ENCODE measurements at regions of chr5 and their contacts with region 1.

Region 1: DNA sequence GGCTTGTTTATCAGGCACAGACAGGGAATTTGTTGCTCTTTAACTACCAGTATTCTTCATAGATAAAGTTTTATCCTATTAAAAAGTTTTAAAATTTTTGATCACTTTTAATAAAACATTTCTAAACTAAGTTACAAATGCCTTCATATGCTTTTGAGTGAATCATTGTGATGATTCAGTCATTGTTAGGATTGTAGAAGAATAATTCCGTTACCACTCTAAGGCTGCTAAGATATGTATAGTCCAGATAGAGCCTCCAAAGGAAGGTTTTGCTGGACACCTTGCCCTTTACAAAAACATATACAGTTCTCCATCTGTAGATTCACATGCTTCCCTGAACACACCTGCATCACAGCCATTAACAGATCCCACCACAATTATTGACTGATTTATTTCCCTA is 233.7 kb downstream of the SPOCK1 start:
- DNase-seq: no peak
- ATAC-seq: no peak
- H3K4me3 ChIP-seq: no peak overlapping the region
- H3K27ac ChIP-seq: no peak overlapping the region
- H3K4me1 ChIP-seq: peaks cover 7% of the 10 kb centered on the region
- H3K27me3 ChIP-seq: no peaks in the 10 kb centered on the region

Region 2: GRCh38 chr5:137305971-137306602 is 40.6 kb after region 1 on chr5:
- intact Hi-C with region 1: loop called in 1 of 4 experiments (anchors 5 kb)
- DNase-seq: no peak
- ATAC-seq: no peak
- H3K4me3 ChIP-seq: no peak overlapping the region
- H3K27ac ChIP-seq: no peak overlapping the region
- H3K4me1 ChIP-seq: peaks cover 3% of the 10 kb centered on the region
- H3K27me3 ChIP-seq: no peaks in the 10 kb centered on the region

Region 3: DNA sequence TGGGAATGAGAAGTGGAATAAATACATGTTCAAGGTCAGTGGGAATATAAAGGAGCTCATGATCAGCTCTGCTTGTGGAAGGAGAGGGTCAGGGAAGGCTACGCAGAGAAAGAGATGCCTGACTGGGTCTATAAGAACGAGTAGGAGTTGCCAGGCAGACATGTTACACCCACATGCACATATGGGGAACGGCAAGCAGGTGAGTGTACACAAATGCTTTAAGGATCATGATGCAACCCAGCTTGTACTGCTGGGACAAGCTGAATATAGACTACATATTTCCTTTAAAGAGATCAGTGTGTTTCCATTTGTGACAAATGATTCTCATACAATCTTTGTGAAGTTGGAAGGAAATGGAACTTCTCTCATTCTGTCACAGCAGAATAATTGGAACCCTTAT is 92.0 kb after region 1 on chr5:
- intact Hi-C with region 1: no loop called
- DNase-seq: no peak
- ATAC-seq: no peak
- H3K4me3 ChIP-seq: no peak overlapping the region
- H3K27ac ChIP-seq: no peak overlapping the region
- H3K4me1 ChIP-seq: no peaks in the 10 kb centered on the region
- H3K27me3 ChIP-seq: no peaks in the 10 kb centered on the region

Region 4: DNA sequence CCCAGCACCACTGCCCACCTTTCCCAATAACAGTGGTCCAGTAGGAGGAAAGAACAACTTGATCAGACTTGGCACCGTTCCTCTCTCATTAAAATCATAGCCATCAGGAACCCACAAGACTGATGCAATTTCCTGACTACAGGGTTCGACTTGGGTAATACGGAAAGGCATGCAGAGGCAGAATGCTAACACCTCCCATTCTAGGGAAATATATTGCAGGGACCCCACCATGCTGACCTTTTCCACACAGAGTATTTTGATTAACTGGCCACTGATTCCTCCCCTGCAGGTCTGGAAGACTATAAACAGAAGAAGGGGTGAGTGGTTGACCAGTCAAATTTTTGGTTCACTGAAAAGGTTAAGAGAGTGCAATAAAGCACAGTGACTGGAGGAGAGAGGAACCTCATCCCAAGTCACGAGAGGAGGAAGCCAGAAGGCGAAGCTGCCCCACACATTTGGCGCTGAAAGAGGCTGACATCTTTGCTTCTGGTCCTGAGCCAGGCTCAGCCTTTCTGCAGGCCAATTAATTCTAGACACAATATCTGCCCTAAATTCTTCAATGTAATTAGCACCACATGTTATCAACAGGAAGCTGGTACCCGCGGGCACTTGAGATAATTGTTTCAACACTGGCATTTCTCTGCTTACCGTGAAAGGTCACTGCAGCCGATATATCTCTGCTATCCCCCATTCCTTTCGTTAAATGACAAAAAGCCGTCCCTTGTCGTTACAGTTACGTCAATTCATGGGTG is 298.4 kb after region 1 on chr5:
- intact Hi-C with region 1: no loop called
- DNase-seq: peak; percentile 25 to 58 (median 51)
- ATAC-seq: peak; percentile 50 to 61
- H3K4me3 ChIP-seq: no peak overlapping the region
- H3K27ac ChIP-seq: no peak overlapping the region
- H3K4me1 ChIP-seq: peaks cover 11% of the 10 kb centered on the region
- H3K27me3 ChIP-seq: peaks cover 2% of the 10 kb centered on the region

Measured in right cardiac atrium (tissue), 5 donors.